ENCODE measurements at regions of chr21 and their contacts with region 1.

Region 1: DNA sequence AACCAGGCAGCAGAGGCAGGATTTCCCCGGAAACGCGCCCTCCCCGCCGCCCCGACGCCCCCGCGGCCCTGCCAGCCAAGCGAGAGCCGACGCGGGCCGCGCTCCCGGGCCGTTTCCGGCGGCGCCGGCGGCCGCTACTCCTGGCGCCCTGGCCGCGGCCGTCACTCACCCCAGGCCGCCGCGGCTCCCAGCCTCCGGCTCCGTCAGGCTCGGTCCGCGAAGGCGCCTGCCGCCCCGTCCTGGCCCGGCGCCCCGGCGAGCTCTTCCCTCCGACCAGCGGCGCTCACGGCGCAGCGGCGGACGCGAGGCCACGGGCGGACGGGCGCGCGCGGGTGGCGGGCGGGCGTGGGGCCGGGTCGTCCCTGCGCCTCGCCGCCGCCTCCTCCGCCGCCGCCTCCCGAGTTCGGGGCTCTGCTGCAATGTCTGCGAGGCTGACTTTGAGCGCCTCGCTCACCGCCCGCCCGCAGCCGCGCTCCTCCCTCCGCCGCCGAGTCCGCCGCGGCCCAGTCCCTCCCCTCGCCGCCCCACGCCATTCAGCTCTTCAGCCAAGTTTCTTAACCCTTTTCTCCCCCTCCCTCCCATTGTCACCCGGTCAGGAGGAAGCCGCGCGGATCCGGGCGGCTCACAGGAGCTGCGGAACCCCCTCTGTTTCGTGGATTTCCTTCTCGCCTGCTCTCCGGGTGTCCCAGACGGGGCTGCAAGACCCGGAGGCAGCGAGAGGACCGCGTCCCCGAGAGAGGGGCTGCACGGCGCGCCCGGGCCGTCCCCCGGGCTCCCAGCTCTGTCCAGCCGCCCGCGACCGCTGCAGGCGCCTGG is at the start of gene NRIP1:
- DNase-seq: peak; percentile 88
- H3K4me3 Mint-ChIP-seq: peak within 1 kb of the TSS; percentile 77
- H3K27ac Mint-ChIP-seq: peak within 1 kb of the TSS; percentile 80
- H3K4me1 Mint-ChIP-seq: peaks cover 28% of the 10 kb centered on the region
- H3K27me3 Mint-ChIP-seq: no peaks in the 10 kb centered on the region
- CTCF ChIP-seq: no peak
- total RNA-seq, gene NRIP1: 26.5 and 31.4 TPM in 2 replicates

Region 2: GRCh38 chr21:14864211-14865021 is 200.4 kb before region 1 on chr21:
- CTCF ChIA-PET with region 1: interaction called, 3 read pairs
- POLR2A ChIA-PET with region 1: interaction called, 4 read pairs
- intact Hi-C with region 1: loop called (anchors 1 kb)
- DNase-seq: peak; percentile 78
- H3K4me3 Mint-ChIP-seq: no peak overlapping the region
- H3K27ac Mint-ChIP-seq: peak overlapping the region; percentile 29
- H3K4me1 Mint-ChIP-seq: peaks cover 30% of the 10 kb centered on the region
- H3K27me3 Mint-ChIP-seq: no peaks in the 10 kb centered on the region
- CTCF ChIP-seq: peak; percentile 45

Region 3: GRCh38 chr21:15164678-15165303 is 100.0 kb after region 1 on chr21:
- CTCF ChIA-PET with region 1: interaction called, 3 read pairs
- POLR2A ChIA-PET with region 1: interaction called, 13 read pairs
- intact Hi-C with region 1: no loop called
- DNase-seq: peak; percentile 96
- H3K4me3 Mint-ChIP-seq: peak overlapping the region; percentile 41
- H3K27ac Mint-ChIP-seq: peak overlapping the region; percentile 50
- H3K4me1 Mint-ChIP-seq: peaks cover 13% of the 10 kb centered on the region
- H3K27me3 Mint-ChIP-seq: no peaks in the 10 kb centered on the region
- CTCF ChIP-seq: no peak

Region 4: GRCh38 chr21:15210235-15210739 is 145.5 kb after region 1 on chr21:
- CTCF ChIA-PET with region 1: no interaction called
- POLR2A ChIA-PET with region 1: interaction called, 12 read pairs
- intact Hi-C with region 1: no loop called
- DNase-seq: peak; percentile 99
- H3K4me3 Mint-ChIP-seq: no peak overlapping the region
- H3K27ac Mint-ChIP-seq: no peak overlapping the region
- H3K4me1 Mint-ChIP-seq: peaks cover 22% of the 10 kb centered on the region
- H3K27me3 Mint-ChIP-seq: no peaks in the 10 kb centered on the region
- CTCF ChIP-seq: no peak

Region 5: GRCh38 chr21:15483138-15483780 is 418.5 kb after region 1 on chr21:
- CTCF ChIA-PET with region 1: interaction called, 12 read pairs
- POLR2A ChIA-PET with region 1: interaction called, 13 read pairs
- intact Hi-C with region 1: loop called (anchors 1 kb)
- DNase-seq: peak; percentile 88
- H3K4me3 Mint-ChIP-seq: no peak overlapping the region
- H3K27ac Mint-ChIP-seq: no peak overlapping the region
- H3K4me1 Mint-ChIP-seq: no peaks in the 10 kb centered on the region
- H3K27me3 Mint-ChIP-seq: no peaks in the 10 kb centered on the region
- CTCF ChIP-seq: peak; percentile 96

Region 6: GRCh38 chr21:15826147-15826780 is 761.5 kb after region 1 on chr21:
- CTCF ChIA-PET with region 1: no interaction called
- POLR2A ChIA-PET with region 1: interaction called, 4 read pairs
- intact Hi-C with region 1: loop called (anchors 2 kb)
- DNase-seq: peak; percentile 83
- H3K4me3 Mint-ChIP-seq: no peak overlapping the region
- H3K27ac Mint-ChIP-seq: no peak overlapping the region
- H3K4me1 Mint-ChIP-seq: peaks cover 6% of the 10 kb centered on the region
- H3K27me3 Mint-ChIP-seq: no peaks in the 10 kb centered on the region
- CTCF ChIP-seq: peak; percentile 60